Activated T-helper 1 cell treated with anti-CD3 and anti-CD28 coated beads, Interleukin-12 subunit alpha, Interleukin-12 subunit beta, Interleukin-2, Interleukin-4 antibody, amounts not matched to agents 30 ng/mL and 10 ng/mL and 1 ng/mL, durations not matched to agents 14 hours and 24 hours and 36 hours (primary cell): ENCODE measurements at regions of chr3 and their contacts with region 1.

Region 1: DNA sequence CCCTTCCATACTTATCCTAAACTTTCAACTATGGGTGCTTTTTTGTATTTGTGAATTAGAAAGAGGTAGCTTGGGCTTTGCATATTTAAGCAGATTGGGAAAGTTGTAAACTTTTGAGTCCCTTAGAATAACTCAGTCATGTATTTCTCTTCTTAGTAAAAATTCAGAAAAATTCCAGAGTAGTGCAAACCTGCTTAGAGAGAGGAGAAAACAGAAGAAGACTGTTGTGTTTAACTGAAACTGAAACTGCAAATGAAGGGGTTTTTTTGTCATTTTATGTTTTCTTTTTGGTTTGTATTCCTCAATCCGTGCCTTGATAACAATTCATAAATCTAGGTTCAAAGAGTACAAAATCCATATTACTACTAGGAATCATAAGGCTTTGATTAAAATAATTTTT is 31.3 kb downstream of the CD200 start:
- DNase-seq: no peak
- H3K4me3 Mint-ChIP-seq: peak overlapping the region; percentile 49
- H3K27ac Mint-ChIP-seq: peak overlapping the region; percentile 18
- H3K4me1 Mint-ChIP-seq: peaks cover 50% of the 10 kb centered on the region
- H3K27me3 Mint-ChIP-seq: no peaks in the 10 kb centered on the region

Region 2: GRCh38 chr3:112382543-112383160 is 18.4 kb after region 1 on chr3:
- intact Hi-C with region 1: loop called (anchors 1 kb)
- DNase-seq: no peak
- H3K4me3 Mint-ChIP-seq: no peak overlapping the region
- H3K27ac Mint-ChIP-seq: peak overlapping the region; percentile 59
- H3K4me1 Mint-ChIP-seq: peaks cover 43% of the 10 kb centered on the region
- H3K27me3 Mint-ChIP-seq: no peaks in the 10 kb centered on the region

Region 3: GRCh38 chr3:112413722-112414121 is 49.4 kb after region 1 on chr3:
- intact Hi-C with region 1: loop called (anchors 2 kb)
- DNase-seq: no peak
- H3K4me3 Mint-ChIP-seq: no peak overlapping the region
- H3K27ac Mint-ChIP-seq: no peak overlapping the region
- H3K4me1 Mint-ChIP-seq: peaks cover 10% of the 10 kb centered on the region
- H3K27me3 Mint-ChIP-seq: peaks cover 3% of the 10 kb centered on the region

Region 4: GRCh38 chr3:112437146-112438022 is 73.1 kb after region 1 on chr3:
- intact Hi-C with region 1: loop called (anchors 2 kb)
- DNase-seq: peak; percentile 30
- H3K4me3 Mint-ChIP-seq: no peak overlapping the region
- H3K27ac Mint-ChIP-seq: peak overlapping the region; percentile 75
- H3K4me1 Mint-ChIP-seq: peaks cover 67% of the 10 kb centered on the region
- H3K27me3 Mint-ChIP-seq: no peaks in the 10 kb centered on the region